Endothelial cell of umbilical vein (primary cell): ENCODE measurements at regions of chr20 and their contacts with region 1.

Region 1: DNA sequence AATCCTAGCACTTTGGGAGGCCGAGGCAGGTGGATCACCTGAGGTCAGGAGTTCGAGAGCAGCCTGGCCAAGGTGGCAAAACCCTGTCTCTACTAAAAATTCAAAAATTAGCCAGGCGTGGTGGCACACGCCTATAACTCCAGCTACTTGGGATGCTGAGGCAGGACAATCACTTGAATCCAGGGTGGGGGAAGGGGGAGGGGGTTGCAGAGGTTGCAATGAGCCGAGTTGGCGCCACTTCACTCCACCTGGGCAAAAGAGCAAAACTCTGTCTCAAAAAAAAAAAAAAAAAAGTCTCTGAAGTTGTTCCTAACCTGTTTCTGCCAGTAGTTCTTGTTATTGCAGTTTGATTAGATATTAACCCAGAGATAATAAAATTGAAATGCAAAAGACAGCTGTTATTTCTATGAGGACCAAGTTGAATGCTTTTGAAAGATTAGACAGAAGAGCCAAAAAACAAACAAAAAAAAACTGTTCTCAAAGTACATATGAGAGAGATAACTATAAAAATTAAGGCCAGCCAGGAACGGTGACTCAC is 22.6 kb downstream of the PIGU start:
- DNase-seq: no peak
- H3K4me3 ChIP-seq: no peak overlapping the region
- H3K27ac ChIP-seq: no peak overlapping the region
- H3K4me1 ChIP-seq: no peaks in the 10 kb centered on the region
- H3K27me3 ChIP-seq: no peaks in the 10 kb centered on the region
- CTCF ChIP-seq: no peak
- POLR2A ChIP-seq: no peak

Region 2: GRCh38 chr20:36377352-36378326 is 1723.4 kb after region 1 on chr20:
- CTCF ChIA-PET with region 1: no interaction called
- POLR2A ChIA-PET with region 1: no interaction called
- dilution Hi-C with region 1: no loop called
- intact Hi-C with region 1: loop called (anchors 10 kb)
- DNase-seq: no peak
- H3K4me3 ChIP-seq: no peak overlapping the region
- H3K27ac ChIP-seq: no peak overlapping the region
- H3K4me1 ChIP-seq: no peaks in the 10 kb centered on the region
- H3K27me3 ChIP-seq: peaks cover 1 to 3% of the 10 kb centered on the region in 2 experiments
- CTCF ChIP-seq: no peak
- POLR2A ChIP-seq: no peak